Activated CD4-positive, alpha-beta memory T cell treated with anti-CD3 and anti-CD28 coated beads, Interleukin-2, amount 10 ng/mL, durations not matched to agents 7 days and 5 days (primary cell): ENCODE measurements at regions of chr3 and their contacts with region 1.

Region 1: GRCh38 chr3:197959898-197960693 is at the start of gene LMLN:
- DNase-seq: peak; percentile 96
- H3K4me3 Mint-ChIP-seq: peak within 1 kb of the TSS; percentile 89
- H3K27ac Mint-ChIP-seq: peak within 1 kb of the TSS; percentile 84
- H3K4me1 Mint-ChIP-seq: peaks cover 58% of the 10 kb centered on the region
- H3K27me3 Mint-ChIP-seq: no peaks in the 10 kb centered on the region
- total RNA-seq, gene LMLN: 2.3 to 3.0 TPM

Region 2: GRCh38 chr3:197949754-197950660 is 10.1 kb before region 1 on chr3 and contains the start of gene RPL35A:
- CTCF ChIA-PET with region 1: interaction called, 3 read pairs
- POLR2A ChIA-PET with region 1: interaction called, 50 read pairs
- DNase-seq: peak; percentile 85
- H3K4me3 Mint-ChIP-seq: peak within 1 kb of the TSS; percentile 96
- H3K27ac Mint-ChIP-seq: peak within 1 kb of the TSS; percentile 90
- H3K4me1 Mint-ChIP-seq: peaks cover 41% of the 10 kb centered on the region
- H3K27me3 Mint-ChIP-seq: no peaks in the 10 kb centered on the region
- total RNA-seq, gene RPL35A: 931 to 944 TPM

Region 3: DNA sequence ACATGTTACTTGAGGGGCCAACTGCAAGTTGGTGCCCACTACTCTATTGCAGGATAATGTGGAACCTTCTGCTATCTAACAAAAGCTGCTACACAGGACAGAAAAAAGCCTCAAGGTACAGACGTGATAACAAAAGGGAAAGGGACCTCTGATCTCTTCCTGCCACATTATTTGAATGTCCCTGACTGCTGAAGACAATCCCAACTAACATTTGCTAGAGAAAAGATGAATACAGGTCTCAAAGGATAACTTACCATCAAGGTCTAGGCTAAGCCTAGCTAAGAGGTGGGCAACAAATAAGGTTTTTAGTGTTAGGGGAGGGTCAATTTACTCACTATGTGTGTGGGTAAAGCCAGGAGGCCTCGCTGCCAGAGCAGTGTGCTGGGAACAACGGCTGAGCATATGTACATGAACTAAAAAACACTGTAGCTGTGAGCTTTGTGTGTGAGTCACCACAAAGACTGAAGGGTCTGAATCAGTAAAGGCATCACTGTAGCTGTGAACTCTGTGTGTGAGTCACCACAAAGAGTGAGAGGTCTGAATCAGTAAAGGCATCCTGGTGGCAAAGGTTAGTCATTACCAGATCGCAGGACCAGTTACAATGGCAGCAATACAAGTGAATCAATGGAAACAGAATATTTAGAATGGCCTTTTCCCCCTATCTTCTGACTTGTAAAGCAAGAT is 111.6 kb after region 1 on chr3:
- CTCF ChIA-PET with region 1: no interaction called
- POLR2A ChIA-PET with region 1: no interaction called
- DNase-seq: peak; percentile 58
- H3K4me3 Mint-ChIP-seq: no peak overlapping the region
- H3K27ac Mint-ChIP-seq: peak overlapping the region; percentile 27
- H3K4me1 Mint-ChIP-seq: peaks cover 16% of the 10 kb centered on the region
- H3K27me3 Mint-ChIP-seq: peaks cover 18% of the 10 kb centered on the region